ENCODE measurements at regions of chr1 and their contacts with region 1.

Region 1: DNA sequence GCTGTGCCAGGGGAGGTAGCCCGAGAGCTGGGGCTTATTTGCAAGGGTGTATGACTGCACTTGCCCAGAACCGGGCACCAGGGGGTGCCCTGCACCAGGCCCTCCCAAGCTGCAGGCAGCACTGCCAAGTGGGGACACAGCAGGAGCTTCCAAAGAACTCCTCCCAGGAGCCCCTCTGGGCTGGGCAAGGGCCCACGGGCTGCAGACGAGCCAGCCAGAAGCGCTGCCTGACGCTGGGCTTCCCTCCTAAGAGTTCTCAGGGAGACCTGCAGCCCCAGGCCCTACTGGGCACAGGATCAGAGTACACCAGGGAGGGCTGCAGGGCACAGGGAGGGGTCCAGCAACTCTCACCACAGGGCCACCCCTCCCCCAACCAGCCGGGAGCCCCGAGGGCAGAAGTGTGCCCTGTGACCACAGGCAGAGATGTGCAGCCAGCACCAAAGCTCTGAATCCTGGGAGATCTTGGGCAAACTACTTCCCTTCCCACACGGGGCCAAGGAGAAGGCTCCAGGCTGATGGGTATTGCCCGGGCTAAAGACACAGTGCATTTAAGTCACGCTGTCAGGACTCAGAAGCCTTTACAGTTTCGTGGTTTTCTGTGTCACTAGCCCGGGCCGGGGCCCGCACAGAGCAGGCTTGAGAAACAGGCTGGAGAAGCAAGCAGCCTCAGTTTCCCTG is 63.4 kb downstream of the KCNAB2 start:
- DNase-seq: peak in 4 of 9 experiments; percentile 24 to 52 (median 33)
- ATAC-seq: peak; percentile 71
- H3K4me3 ChIP-seq: no peak overlapping the region
- H3K4me3 Mint-ChIP-seq: no peak overlapping the region
- H3K27ac ChIP-seq: no peak overlapping the region
- H3K27ac Mint-ChIP-seq: no peak overlapping the region
- H3K4me1 ChIP-seq: no peaks in the 10 kb centered on the region
- H3K4me1 Mint-ChIP-seq: no peaks in the 10 kb centered on the region
- H3K27me3 ChIP-seq: peaks cover 4 to 8% of the 10 kb centered on the region in 2 experiments
- H3K27me3 Mint-ChIP-seq: peaks cover 15% of the 10 kb centered on the region
- CTCF ChIP-seq: no peak

Region 2: GRCh38 chr1:6205849-6206519 is 96.9 kb after region 1 on chr1 and contains the start of gene RNF207:
- CTCF ChIA-PET with region 1: no interaction called
- POLR2A ChIA-PET with region 1: no interaction called
- intact Hi-C with region 1: loop called in 1 of 2 experiments (anchors 2 kb)
- DNase-seq: peak in 7 of 9 experiments; percentile 24 to 77 (median 39)
- ATAC-seq: peak; percentile 62
- H3K4me3 ChIP-seq: peak within 1 kb of the TSS; percentile 57 to 61
- H3K4me3 Mint-ChIP-seq: peak within 1 kb of the TSS; percentile 75
- H3K27ac ChIP-seq: no peak within 1 kb of the TSS
- H3K27ac Mint-ChIP-seq: no peak within 1 kb of the TSS
- H3K4me1 ChIP-seq: peaks cover 19% of the 10 kb centered on the region
- H3K4me1 Mint-ChIP-seq: peaks cover 12% of the 10 kb centered on the region
- H3K27me3 ChIP-seq: peaks cover 5 to 16% of the 10 kb centered on the region in 2 experiments
- H3K27me3 Mint-ChIP-seq: peaks cover 18% of the 10 kb centered on the region
- CTCF ChIP-seq: no peak
- total RNA-seq, gene RNF207: 5.1 to 5.2 TPM

Measured in CD8-positive, alpha-beta T cell (primary cell).